ENCODE measurements at regions of chr14 and their contacts with region 1.

Region 1: DNA sequence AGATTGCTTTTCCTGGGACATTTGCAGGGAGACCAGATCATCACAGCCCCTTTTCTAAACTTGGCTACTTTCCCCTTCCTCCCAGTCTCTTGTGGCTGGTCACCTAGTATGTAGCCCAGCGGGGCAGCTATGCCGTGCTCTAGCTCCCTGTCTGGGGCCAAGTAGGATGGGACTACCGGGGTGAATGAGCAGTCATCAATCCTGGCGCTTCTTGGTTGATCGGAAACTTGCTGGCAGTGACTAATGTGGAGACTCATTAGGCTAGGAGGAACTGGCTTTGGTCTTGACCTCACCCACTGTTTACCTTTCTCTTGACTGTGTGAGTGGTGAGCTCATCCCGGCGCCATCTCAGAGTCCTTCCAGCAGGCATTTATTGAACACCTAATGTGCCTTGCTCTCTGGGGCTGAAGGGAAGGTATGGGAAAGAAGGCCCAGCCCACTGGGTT is 15.9 kb downstream of the PLEKHG3 start:
- DNase-seq: peak; percentile 71
- H3K4me3 Mint-ChIP-seq: peak overlapping the region; percentile 56
- H3K27ac Mint-ChIP-seq: peak overlapping the region; percentile 88
- H3K4me1 Mint-ChIP-seq: peaks cover 85% of the 10 kb centered on the region
- H3K27me3 Mint-ChIP-seq: no peaks in the 10 kb centered on the region
- CTCF ChIP-seq: no peak

Region 2: DNA sequence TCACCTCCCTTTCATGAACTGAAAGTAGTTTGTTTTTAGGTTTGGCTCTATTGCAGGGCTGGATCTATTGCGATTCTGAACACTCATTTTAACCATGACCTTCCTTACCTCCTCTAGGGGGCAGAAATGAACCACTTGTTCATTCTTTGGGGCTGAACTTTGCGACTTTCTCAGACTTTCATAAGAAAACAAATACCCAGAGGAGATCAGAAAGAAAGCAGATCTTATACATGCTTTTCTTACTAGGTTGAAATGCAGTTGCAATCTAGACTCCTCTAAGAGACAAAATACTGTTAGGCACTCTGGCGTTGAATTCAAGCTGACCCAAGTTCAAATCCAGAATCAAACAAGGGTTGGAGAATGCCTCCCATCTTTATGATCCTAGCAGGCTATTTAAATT is 48.6 kb before region 1 on chr14:
- CTCF ChIA-PET with region 1: no interaction called
- intact Hi-C with region 1: loop called (anchors 5 kb)
- DNase-seq: no peak
- H3K4me3 Mint-ChIP-seq: no peak overlapping the region
- H3K27ac Mint-ChIP-seq: no peak overlapping the region
- H3K4me1 Mint-ChIP-seq: peaks cover 9% of the 10 kb centered on the region
- H3K27me3 Mint-ChIP-seq: no peaks in the 10 kb centered on the region
- CTCF ChIP-seq: peak; percentile 62

Region 3: GRCh38 chr14:64698903-64699302 is 21.3 kb before region 1 on chr14:
- CTCF ChIA-PET with region 1: interaction called, 13 read pairs
- intact Hi-C with region 1: no loop called
- DNase-seq: peak; percentile 57
- H3K4me3 Mint-ChIP-seq: no peak overlapping the region
- H3K27ac Mint-ChIP-seq: peak overlapping the region; percentile 42
- H3K4me1 Mint-ChIP-seq: peaks cover 17% of the 10 kb centered on the region
- H3K27me3 Mint-ChIP-seq: peaks cover 38% of the 10 kb centered on the region
- CTCF ChIP-seq: no peak

Region 4: DNA sequence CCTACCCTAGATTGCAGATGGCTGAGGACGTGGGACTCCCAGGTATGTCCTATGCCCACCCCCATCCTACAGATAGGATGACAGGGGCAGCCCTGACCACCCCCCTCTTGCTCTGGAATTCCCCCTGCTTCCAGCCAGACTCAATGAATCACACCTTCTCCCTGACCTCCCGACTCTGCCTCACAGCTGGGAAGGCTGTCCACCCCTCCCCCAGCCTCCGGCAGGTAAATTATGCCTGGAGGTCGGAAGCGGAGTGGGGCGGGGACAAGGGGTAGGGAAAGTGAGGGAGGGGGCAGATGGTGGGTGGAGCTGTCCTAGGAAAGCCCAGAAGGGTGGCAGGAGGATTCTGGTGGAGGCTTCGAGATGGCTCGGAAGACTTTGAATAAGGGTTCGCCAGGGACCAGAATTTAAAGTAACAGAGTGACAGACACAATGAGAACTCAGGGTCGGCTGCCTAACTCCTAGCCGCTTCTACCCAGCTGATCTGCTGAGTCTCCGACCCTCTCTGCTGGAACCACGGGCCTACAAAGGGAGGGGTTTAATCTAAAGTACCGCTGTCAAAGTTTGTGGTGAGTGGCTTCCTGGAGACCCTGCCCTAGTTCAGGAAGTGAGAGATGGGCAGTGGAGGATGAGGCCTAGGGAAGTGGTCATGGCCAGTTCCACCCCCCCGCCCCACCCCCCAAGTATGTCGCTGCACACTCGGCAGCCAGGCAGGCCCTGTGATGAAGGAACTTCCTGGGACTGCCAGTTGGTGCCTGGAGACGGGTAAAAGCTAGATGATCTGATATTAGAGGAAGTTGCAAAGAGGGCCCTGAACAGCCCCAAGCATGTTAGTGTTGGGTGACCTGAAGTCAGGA is 11.8 kb before region 1 on chr14:
- CTCF ChIA-PET with region 1: interaction called, 10 read pairs
- intact Hi-C with region 1: no loop called
- DNase-seq: peak; percentile 82
- H3K4me3 Mint-ChIP-seq: peak overlapping the region; percentile 61
- H3K27ac Mint-ChIP-seq: peak overlapping the region; percentile 39
- H3K4me1 Mint-ChIP-seq: peaks cover 52% of the 10 kb centered on the region
- H3K27me3 Mint-ChIP-seq: no peaks in the 10 kb centered on the region
- CTCF ChIP-seq: no peak

Measured in Calu3 (cell line).